CD8-positive, alpha-beta T cell (primary cell): ENCODE measurements at regions of chr17 and their contacts with region 1.

Region 1: DNA sequence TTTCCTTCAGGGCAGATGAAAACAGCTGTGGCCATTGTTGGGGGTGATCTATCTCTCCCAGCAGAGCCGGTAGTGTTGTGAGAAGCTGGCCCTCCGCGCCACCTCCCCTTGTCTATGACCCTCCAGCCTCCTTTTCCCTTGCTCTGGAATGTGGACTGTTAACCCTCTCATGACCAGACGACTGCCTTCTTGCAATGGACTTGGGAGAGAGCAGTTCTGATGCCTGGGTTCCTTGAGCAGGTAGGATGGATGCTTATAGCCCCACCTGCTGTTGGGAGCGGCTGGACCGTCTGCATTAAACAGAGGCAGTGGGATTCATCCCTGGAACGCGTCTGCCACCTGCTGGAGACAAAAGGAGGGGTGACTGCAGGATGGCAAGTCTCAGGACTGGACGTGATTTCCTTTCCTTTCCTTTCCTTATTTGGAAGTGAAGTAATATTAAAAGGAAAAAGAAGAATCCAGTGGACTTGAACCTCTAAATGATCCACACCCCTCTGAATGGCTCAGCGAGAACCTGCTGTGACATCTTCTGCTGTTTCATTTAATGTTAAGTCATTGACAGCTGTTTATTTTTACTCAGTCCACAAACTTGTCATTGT is 1.8 kb upstream of the SOST start:
- DNase-seq: peak; percentile 76 to 92 (median 88)
- ATAC-seq: peak; percentile 98
- H3K4me3 ChIP-seq: no peak overlapping the region
- H3K4me3 Mint-ChIP-seq: no peak overlapping the region
- H3K27ac ChIP-seq: no peak overlapping the region
- H3K27ac Mint-ChIP-seq: no peak overlapping the region
- H3K4me1 ChIP-seq: no peaks in the 10 kb centered on the region
- H3K4me1 Mint-ChIP-seq: no peaks in the 10 kb centered on the region
- H3K27me3 ChIP-seq: peaks cover 0 to 7% of the 10 kb centered on the region in 2 experiments
- H3K27me3 Mint-ChIP-seq: peaks cover 22% of the 10 kb centered on the region
- CTCF ChIP-seq: peak; percentile 89

Region 2: GRCh38 chr17:43701318-43701743 is 59.0 kb before region 1 on chr17:
- CTCF ChIA-PET with region 1: interaction called, 23 read pairs
- POLR2A ChIA-PET with region 1: no interaction called
- intact Hi-C with region 1: no loop called
- DNase-seq: peak in 8 of 9 experiments; percentile 13 to 81 (median 52)
- ATAC-seq: peak; percentile 77
- H3K4me3 ChIP-seq: peak overlapping the region in 1 of 2 experiments; percentile 2
- H3K4me3 Mint-ChIP-seq: no peak overlapping the region
- H3K27ac ChIP-seq: no peak overlapping the region
- H3K27ac Mint-ChIP-seq: no peak overlapping the region
- H3K4me1 ChIP-seq: peaks cover 6% of the 10 kb centered on the region
- H3K4me1 Mint-ChIP-seq: peaks cover 13% of the 10 kb centered on the region
- H3K27me3 ChIP-seq: no peaks in the 10 kb centered on the region
- H3K27me3 Mint-ChIP-seq: peaks cover 21% of the 10 kb centered on the region
- CTCF ChIP-seq: no peak

Region 3: GRCh38 chr17:43734376-43734775 is 26.0 kb before region 1 on chr17:
- CTCF ChIA-PET with region 1: interaction called, 5 read pairs
- POLR2A ChIA-PET with region 1: no interaction called
- intact Hi-C with region 1: loop called in 1 of 2 experiments (anchors 1 kb)
- DNase-seq: no peak
- ATAC-seq: no peak
- H3K4me3 ChIP-seq: no peak overlapping the region
- H3K4me3 Mint-ChIP-seq: no peak overlapping the region
- H3K27ac ChIP-seq: no peak overlapping the region
- H3K27ac Mint-ChIP-seq: no peak overlapping the region
- H3K4me1 ChIP-seq: no peaks in the 10 kb centered on the region
- H3K4me1 Mint-ChIP-seq: no peaks in the 10 kb centered on the region
- H3K27me3 ChIP-seq: no peaks in the 10 kb centered on the region
- H3K27me3 Mint-ChIP-seq: peaks cover 9% of the 10 kb centered on the region
- CTCF ChIP-seq: no peak

Region 4: DNA sequence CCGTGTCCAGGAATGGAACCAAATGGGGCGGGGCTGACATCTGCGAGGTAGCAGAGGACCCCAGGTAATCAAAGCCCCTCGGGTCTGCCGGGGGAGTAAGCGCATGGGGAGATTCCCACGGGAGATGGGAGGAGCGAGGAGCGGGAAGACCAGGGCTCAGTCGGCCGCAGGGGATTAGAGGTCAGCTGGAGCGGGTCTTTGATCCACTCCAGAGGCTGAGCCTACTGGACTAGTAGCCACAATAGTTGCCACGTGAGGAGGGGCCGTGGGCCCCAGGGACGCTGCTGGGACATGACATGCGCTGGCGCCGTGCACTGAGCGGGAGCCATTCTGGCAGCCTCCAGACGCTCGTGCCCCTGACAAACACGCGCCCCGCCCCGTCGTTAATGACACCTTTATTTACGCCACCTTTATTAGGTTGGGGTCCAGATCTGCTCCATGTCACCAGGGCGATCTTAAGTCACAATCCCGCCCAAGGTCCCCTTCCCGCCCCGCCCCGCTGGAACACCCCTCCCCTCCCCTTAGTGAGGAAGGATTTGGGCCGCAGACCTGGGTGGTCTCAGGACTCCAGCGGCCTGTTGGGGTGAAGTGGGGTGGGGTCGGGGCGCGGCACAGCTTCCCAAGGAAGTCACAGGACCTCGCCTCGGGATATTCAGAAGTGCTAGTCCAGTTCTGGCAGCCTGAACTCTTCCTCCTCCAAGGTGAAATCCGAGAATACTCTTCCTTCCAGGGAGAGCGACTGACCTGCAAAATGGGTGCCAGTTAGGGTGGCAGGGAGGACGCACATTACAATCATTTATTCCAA is 166.9 kb after region 1 on chr17:
- CTCF ChIA-PET with region 1: no interaction called
- POLR2A ChIA-PET with region 1: no interaction called
- intact Hi-C with region 1: no loop called
- DNase-seq: peak in 1 of 9 experiments; percentile 32
- ATAC-seq: peak; percentile 63
- H3K4me3 ChIP-seq: peak overlapping the region; percentile 21 to 65
- H3K4me3 Mint-ChIP-seq: peak overlapping the region; percentile 86
- H3K27ac ChIP-seq: peak overlapping the region in 1 of 2 experiments; percentile 35
- H3K27ac Mint-ChIP-seq: peak overlapping the region; percentile 88
- H3K4me1 ChIP-seq: peaks cover 23% of the 10 kb centered on the region
- H3K4me1 Mint-ChIP-seq: peaks cover 26% of the 10 kb centered on the region
- H3K27me3 ChIP-seq: peaks cover 0 to 3% of the 10 kb centered on the region in 2 experiments
- H3K27me3 Mint-ChIP-seq: no peaks in the 10 kb centered on the region
- CTCF ChIP-seq: no peak